Activated naive CD4-positive, alpha-beta T cell treated with anti-CD3 and anti-CD28 coated beads, Interleukin-2, amount 10 ng/mL, durations not matched to agents 7 days and 5 days (primary cell): ENCODE measurements at regions of chr2 and their contacts with region 1.

Region 1: GRCh38 chr2:157302492-157303099 is 23.0 kb downstream of the ERMN start:
- DNase-seq: peak; percentile 45
- H3K4me3 Mint-ChIP-seq: no peak overlapping the region
- H3K27ac Mint-ChIP-seq: no peak overlapping the region
- H3K4me1 Mint-ChIP-seq: peaks cover 20% of the 10 kb centered on the region
- H3K27me3 Mint-ChIP-seq: peaks cover 13% of the 10 kb centered on the region

Region 2: DNA sequence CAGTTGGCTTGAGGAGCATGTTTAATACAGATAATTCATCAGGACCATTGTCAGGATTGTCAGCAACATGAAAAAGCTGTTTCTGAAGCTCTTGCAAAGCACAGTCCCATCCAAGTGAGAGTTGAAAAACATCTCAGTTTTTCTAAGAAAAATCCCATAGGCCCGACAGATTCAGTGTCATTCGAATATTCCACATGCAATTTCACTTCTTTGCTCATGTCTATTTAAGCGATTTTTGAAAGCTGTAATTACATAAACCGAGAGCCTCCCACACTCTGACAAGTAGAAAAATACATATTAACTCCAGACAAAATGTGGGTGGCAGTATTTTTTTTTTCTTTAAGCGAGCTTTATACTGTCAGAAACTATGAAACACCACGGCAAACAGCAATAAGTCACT is 179.8 kb before region 1 on chr2:
- CTCF ChIA-PET with region 1: no interaction called
- DNase-seq: no peak
- H3K4me3 Mint-ChIP-seq: no peak overlapping the region
- H3K27ac Mint-ChIP-seq: no peak overlapping the region
- H3K4me1 Mint-ChIP-seq: no peaks in the 10 kb centered on the region
- H3K27me3 Mint-ChIP-seq: no peaks in the 10 kb centered on the region

Region 3: GRCh38 chr2:157336137-157337010 is 33.8 kb after region 1 on chr2:
- CTCF ChIA-PET with region 1: interaction called, 36 read pairs
- DNase-seq: peak; percentile 52
- H3K4me3 Mint-ChIP-seq: peak overlapping the region; percentile 35
- H3K27ac Mint-ChIP-seq: peak overlapping the region; percentile 39
- H3K4me1 Mint-ChIP-seq: peaks cover 52% of the 10 kb centered on the region
- H3K27me3 Mint-ChIP-seq: no peaks in the 10 kb centered on the region

Region 4: GRCh38 chr2:157492189-157492773 is 189.7 kb after region 1 on chr2:
- CTCF ChIA-PET with region 1: interaction called, 76 read pairs
- DNase-seq: peak; percentile 83
- H3K4me3 Mint-ChIP-seq: no peak overlapping the region
- H3K27ac Mint-ChIP-seq: no peak overlapping the region
- H3K4me1 Mint-ChIP-seq: peaks cover 62% of the 10 kb centered on the region
- H3K27me3 Mint-ChIP-seq: no peaks in the 10 kb centered on the region

Region 5: GRCh38 chr2:157509744-157510143 is 207.1 kb after region 1 on chr2:
- CTCF ChIA-PET with region 1: interaction called, 11 read pairs
- DNase-seq: no peak
- H3K4me3 Mint-ChIP-seq: no peak overlapping the region
- H3K27ac Mint-ChIP-seq: no peak overlapping the region
- H3K4me1 Mint-ChIP-seq: no peaks in the 10 kb centered on the region
- H3K27me3 Mint-ChIP-seq: peaks cover 4% of the 10 kb centered on the region

Region 6: DNA sequence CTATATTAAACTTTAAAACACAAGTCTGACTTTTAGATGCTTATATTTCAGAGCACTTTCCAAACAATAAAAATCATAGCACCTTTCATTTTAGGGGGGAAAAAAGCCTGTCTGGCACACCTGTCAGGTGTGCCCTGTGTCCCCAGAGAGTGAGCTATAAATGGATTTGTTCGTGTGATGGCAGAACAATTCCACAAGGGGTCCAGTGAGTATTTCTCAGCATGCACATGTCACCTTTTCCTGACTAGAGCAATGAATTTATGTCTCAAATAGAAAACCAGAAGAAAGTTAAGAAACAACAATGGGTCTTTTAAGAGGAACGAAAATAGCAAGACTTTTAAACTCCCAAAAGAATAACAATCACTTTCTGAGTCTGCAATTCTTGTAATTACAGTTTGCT is 270.1 kb after region 1 on chr2:
- CTCF ChIA-PET with region 1: no interaction called
- DNase-seq: peak; percentile 26
- H3K4me3 Mint-ChIP-seq: no peak overlapping the region
- H3K27ac Mint-ChIP-seq: no peak overlapping the region
- H3K4me1 Mint-ChIP-seq: no peaks in the 10 kb centered on the region
- H3K27me3 Mint-ChIP-seq: no peaks in the 10 kb centered on the region

Region 7: DNA sequence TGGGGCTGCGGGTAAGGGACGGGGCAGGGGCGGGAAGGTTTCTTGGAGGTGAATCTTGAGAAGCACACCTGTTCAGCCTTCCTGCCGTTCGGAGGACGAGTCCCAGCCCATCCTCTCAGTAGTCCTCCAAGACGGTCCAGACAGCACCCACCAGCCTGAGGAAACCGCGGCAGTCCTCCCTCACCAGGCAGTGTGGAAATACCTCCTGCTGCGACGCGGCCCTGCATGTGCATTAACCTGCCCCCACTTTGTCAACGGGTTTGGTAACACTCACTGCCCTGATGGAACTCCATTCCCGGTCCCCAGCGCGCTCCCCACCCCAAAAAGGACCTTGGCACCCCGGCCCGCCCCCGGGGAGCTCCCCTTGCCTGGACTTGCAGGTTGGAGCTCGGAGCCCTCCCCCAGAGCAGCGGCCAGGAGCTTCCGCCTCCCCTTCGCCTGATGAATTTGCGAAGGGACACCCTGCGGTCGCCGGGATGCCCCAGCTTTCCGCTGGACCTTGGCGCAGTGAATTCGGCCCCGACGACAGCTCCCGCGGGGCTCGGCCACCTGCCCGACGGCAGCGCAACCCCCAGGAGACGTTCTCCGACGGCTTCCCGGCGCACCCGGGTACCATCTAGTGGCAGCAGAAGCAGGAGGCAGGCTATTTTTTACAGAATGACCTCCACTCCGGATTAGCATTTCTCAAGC is 294.5 kb after region 1 on chr2:
- CTCF ChIA-PET with region 1: interaction called, 80 read pairs
- DNase-seq: peak; percentile 69
- H3K4me3 Mint-ChIP-seq: peak overlapping the region; percentile 54
- H3K27ac Mint-ChIP-seq: no peak overlapping the region
- H3K4me1 Mint-ChIP-seq: peaks cover 11% of the 10 kb centered on the region
- H3K27me3 Mint-ChIP-seq: peaks cover 11% of the 10 kb centered on the region

Region 8: DNA sequence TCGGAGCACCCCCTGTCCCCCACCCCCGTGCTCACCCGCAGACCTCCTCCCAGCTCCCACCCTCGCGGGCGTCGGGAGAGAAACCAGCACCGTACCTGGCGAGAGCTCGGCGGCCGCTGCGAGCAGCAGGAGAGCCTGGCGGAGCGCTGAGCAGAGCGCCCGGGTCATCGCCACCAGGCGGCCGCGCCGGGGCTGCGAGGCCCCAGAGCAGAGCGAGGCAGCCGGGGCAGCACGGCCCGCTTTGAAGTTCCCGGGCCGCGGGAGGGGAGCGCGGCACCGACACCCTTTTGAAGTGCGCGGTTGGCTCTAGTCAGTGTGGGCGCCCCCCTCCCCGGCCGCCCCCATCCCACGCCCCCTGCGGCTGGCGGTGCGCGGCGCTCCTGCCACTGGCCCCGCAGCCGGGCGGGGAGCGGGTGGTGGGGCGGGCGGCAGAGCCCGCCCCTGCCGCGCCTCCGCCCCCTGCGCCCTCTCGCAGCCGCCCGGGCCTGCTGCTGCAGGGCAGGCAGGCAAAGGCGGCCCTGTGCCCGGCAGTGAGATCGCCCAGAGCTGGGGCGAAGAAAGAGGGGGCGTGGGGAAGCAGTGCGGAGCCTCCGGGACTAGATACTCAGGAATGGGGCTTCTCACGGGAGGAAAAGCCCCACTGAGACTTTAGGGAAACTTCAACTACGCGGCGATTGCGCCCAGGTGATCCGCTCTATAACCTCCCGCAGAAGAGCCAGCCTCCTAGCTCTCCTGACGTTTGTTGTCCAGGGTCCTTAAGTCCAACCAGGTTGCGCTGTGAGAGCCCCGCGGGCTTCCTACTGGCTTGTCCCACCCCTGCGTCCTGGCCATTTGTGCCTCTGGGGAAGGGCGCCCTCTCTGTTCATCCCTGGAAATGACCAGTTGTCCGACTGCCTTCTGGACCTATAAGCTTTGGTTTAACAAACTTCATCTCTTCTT is 326.1 kb after region 1 on chr2 and contains the start of gene ACVR1C:
- CTCF ChIA-PET with region 1: interaction called, 26 read pairs
- DNase-seq: peak; percentile 81
- H3K4me3 Mint-ChIP-seq: peak within 1 kb of the TSS; percentile 88
- H3K27ac Mint-ChIP-seq: peak within 1 kb of the TSS; percentile 82
- H3K4me1 Mint-ChIP-seq: peaks cover 41% of the 10 kb centered on the region
- H3K27me3 Mint-ChIP-seq: peaks cover 18% of the 10 kb centered on the region

Region 9: DNA sequence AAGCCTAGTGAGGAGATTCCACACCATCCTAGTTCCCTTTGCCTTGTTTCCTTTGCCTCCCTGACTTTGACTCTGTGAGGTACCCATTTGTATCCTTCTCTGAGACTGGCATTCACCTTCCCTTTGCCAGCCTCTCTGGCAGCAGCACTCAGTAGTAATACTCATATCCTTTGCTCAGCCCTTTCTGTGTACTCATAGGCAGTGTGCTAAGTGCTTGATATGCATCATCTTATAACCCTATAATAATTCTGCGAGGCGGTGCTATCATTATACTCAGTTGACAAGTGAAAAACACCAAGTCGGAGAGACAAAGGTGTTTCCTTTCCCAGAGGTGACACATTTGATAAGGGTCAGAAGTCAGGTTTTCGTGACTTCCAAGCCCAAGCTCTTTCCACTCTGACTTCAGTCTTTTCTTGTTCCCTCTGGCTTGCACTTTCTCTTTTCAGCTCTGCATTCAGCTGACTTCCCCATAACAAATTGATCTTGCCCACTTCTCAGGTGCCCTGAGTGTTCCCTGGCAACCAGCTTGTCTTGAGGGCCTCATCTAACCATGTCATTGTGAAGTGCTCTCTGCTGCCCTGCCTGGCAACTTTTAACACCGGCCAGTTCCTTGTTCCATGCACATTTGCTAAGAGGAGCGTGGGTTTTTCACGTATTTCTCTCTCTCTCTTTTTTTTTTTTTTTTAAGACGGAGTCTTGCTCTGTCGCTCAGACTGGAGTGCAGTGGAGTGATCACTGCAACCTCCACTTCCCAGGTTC is 704.5 kb after region 1 on chr2:
- CTCF ChIA-PET with region 1: interaction called, 13 read pairs
- DNase-seq: peak; percentile 49
- H3K4me3 Mint-ChIP-seq: no peak overlapping the region
- H3K27ac Mint-ChIP-seq: no peak overlapping the region
- H3K4me1 Mint-ChIP-seq: peaks cover 20% of the 10 kb centered on the region
- H3K27me3 Mint-ChIP-seq: peaks cover 14% of the 10 kb centered on the region